Posterior vena cava (tissue), 2 donors: ENCODE measurements at regions of chr16 and their contacts with region 1.

Region 1: GRCh38 chr16:68147438-68147837 is 62.3 kb downstream of the NFATC3 start:
- DNase-seq: no peak

Region 2: GRCh38 chr16:68100488-68100887 is 47.0 kb before region 1 on chr16:
- intact Hi-C with region 1: loop called in 1 of 2 experiments (anchors 1 kb)
- DNase-seq: no peak